IMR-90 (cell line): ENCODE measurements at regions of chr3 and their contacts with region 1.

Region 1: GRCh38 chr3:104604369-104605010 is 762.2 kb upstream of the ALCAM start:
- DNase-seq: peak; percentile 48
- ATAC-seq: peak; percentile 86
- H3K4me3 ChIP-seq: no peak overlapping the region
- H3K27ac ChIP-seq: no peak overlapping the region
- H3K4me1 ChIP-seq: no peaks in the 10 kb centered on the region
- H3K27me3 ChIP-seq: no peaks in the 10 kb centered on the region
- CTCF ChIP-seq: peak; percentile 51
- POLR2A ChIP-seq: no peak
- RAD21 ChIP-seq: peak; percentile 53

Region 2: DNA sequence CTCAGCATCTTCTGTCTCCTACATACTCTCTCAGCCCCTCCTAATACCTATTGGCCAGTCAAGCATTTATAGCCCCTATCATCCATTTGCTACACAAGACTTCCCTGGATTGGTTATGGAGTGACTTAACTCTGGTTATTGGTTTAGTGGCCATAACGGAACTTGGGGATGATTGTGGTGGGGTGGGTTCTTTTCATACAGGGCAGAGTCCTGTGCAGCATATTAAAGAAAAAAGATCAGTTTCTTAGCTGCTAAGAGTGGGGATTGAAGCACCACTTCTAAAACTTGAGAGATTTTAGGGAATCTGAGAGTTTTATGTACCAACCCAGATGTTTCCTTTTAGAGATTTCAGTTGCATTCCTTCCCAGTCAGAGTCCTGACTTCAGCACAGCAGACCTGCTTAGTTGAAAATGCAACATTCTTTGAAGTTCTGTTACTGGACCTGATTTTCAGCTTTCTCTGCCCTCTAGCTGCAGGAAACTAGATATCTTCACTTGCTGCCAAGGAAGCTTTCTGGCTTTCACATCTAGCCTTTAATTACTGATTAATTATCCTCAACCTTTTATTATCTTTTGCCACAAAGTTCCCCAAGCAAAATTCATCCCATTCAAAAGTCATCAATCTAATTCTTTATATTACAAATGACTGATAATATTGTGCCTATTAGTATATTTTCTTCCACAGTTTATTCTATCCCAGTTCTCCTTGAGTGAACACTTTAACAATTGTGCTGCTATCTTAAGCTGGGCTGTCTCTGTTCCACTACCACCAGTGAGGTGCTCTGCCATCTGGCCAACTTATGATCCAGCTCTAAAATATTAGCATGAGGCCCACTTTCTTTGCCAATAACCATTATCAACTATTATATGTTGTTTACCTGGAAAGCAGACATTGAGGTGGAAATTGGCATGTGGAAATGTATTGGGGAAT is 143.7 kb before region 1 on chr3:
- CTCF ChIA-PET with region 1: no interaction called
- POLR2A ChIA-PET with region 1: no interaction called
- dilution Hi-C with region 1: no loop called
- in situ Hi-C with region 1: no loop called
- intact Hi-C with region 1: no loop called
- DNase-seq: peak; percentile 32
- ATAC-seq: peak; percentile 63
- H3K4me3 ChIP-seq: no peak overlapping the region
- H3K27ac ChIP-seq: no peak overlapping the region
- H3K4me1 ChIP-seq: no peaks in the 10 kb centered on the region
- H3K27me3 ChIP-seq: no peaks in the 10 kb centered on the region
- CTCF ChIP-seq: peak; percentile 34
- POLR2A ChIP-seq: no peak
- RAD21 ChIP-seq: no peak

Region 3: GRCh38 chr3:104676241-104676640 is 71.8 kb after region 1 on chr3:
- CTCF ChIA-PET with region 1: no interaction called
- POLR2A ChIA-PET with region 1: no interaction called
- dilution Hi-C with region 1: no loop called
- in situ Hi-C with region 1: no loop called
- intact Hi-C with region 1: no loop called
- DNase-seq: peak; percentile 1
- ATAC-seq: no peak
- H3K4me3 ChIP-seq: no peak overlapping the region
- H3K27ac ChIP-seq: no peak overlapping the region
- H3K4me1 ChIP-seq: no peaks in the 10 kb centered on the region
- H3K27me3 ChIP-seq: no peaks in the 10 kb centered on the region
- CTCF ChIP-seq: no peak
- POLR2A ChIP-seq: no peak
- RAD21 ChIP-seq: no peak

Region 4: DNA sequence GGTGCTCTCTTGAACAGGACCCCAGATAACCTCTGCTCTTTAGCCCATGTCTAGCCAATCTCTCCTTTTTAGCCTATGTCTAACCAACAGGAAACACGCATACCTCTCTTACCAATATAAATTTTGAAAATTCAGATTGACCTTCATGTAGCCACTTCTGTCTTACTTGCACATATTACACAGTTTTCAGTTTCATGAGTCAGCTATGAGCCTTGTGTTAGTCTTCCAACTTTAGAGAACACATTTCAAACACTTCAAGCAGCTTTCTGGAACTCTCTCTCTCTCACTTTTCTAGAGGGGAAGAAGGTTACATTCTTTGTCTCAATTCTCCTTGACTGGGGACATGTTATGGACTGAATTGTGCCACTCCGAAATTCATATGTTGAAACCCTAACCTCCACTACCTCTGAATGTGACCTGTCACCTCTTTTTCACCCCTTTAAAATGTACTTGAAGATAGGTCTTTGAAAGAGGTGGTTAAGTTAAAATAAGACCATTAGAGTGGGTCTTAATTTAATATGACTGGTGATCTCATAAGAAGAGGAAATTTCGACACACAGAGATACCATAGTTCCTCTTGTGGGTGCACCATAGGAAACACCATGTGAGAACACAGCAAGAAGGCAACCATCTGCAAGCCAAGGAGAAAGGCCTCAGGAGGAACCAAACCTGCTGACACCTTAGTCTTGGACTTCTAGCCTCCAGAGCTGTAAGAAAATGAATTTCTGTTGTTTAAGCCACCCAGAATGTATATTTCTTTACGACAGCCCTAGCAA is 281.9 kb after region 1 on chr3:
- CTCF ChIA-PET with region 1: no interaction called
- POLR2A ChIA-PET with region 1: no interaction called
- dilution Hi-C with region 1: no loop called
- in situ Hi-C with region 1: no loop called
- intact Hi-C with region 1: no loop called
- DNase-seq: peak; percentile 73
- ATAC-seq: peak; percentile 71
- H3K4me3 ChIP-seq: no peak overlapping the region
- H3K27ac ChIP-seq: no peak overlapping the region
- H3K4me1 ChIP-seq: peaks cover 8% of the 10 kb centered on the region; the same call in 1 of the 2 replicates
- H3K27me3 ChIP-seq: no peaks in the 10 kb centered on the region
- CTCF ChIP-seq: no peak
- POLR2A ChIP-seq: no peak
- RAD21 ChIP-seq: no peak

Region 5: GRCh38 chr3:105527949-105528348 is 923.5 kb after region 1 on chr3:
- CTCF ChIA-PET with region 1: no interaction called
- POLR2A ChIA-PET with region 1: no interaction called
- dilution Hi-C with region 1: no loop called
- in situ Hi-C with region 1: loop called (anchors 25 kb)
- intact Hi-C with region 1: no loop called
- DNase-seq: peak; percentile 49
- ATAC-seq: no peak
- H3K4me3 ChIP-seq: no peak overlapping the region
- H3K27ac ChIP-seq: no peak overlapping the region
- H3K4me1 ChIP-seq: peaks cover 3% of the 10 kb centered on the region; the same call in 1 of the 2 replicates
- H3K27me3 ChIP-seq: no peaks in the 10 kb centered on the region
- CTCF ChIP-seq: no peak
- POLR2A ChIP-seq: no peak
- RAD21 ChIP-seq: no peak